Activated CD8-positive, alpha-beta T cell treated with anti-CD3 and anti-CD28 coated beads, Interleukin-2, amount 10 ng/mL, durations not matched to agents 7 days and 5 days (primary cell): ENCODE measurements at regions of chr2 and their contacts with region 1.

Region 1: GRCh38 chr2:236558993-236559978 is 10.3 kb upstream of the ACKR3 start:
- DNase-seq: no peak
- ATAC-seq: no peak
- H3K4me3 Mint-ChIP-seq: no peak overlapping the region
- H3K27ac Mint-ChIP-seq: no peak overlapping the region
- H3K4me1 Mint-ChIP-seq: peaks cover 44% of the 10 kb centered on the region
- H3K27me3 Mint-ChIP-seq: no peaks in the 10 kb centered on the region

Region 2: DNA sequence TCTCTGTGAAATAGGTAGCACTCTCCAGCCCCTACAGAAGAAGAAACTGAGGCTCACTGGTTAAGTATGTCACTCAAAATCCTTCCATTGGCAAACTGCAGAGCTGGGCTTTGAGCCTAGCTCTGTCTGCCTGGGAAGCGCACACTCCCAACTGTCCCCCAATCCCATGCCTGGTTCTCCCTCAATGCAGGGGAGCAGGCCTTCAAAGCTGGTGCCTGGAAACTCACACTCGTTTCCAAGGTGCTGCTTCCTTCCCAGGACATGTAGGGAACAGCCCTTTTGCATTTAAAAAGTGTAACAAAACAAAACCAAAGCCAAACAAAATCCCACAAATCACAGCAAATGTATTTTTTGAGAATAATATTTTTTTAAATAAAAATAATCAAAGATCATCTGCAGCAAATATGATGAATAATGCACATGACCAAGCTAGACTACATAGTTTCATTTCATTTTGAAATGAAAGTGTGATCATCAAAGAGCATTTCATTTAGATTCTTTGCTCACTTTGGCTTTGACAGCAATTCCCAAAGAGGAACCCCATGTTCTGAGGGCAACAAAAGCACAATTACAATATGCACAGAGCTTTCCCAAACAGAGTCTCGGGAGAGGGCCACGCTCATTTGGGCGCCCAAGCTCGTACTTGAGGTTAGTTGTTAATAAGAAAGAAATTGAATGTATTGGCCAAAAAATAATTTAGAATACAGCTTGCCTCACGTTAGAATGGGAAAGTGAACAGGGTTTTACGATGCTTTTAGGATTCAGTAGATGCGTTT is 86.4 kb before region 1 on chr2:
- CTCF ChIA-PET with region 1: no interaction called
- POLR2A ChIA-PET with region 1: no interaction called
- DNase-seq: no peak
- ATAC-seq: no peak
- H3K4me3 Mint-ChIP-seq: no peak overlapping the region
- H3K27ac Mint-ChIP-seq: no peak overlapping the region
- H3K4me1 Mint-ChIP-seq: no peaks in the 10 kb centered on the region
- H3K27me3 Mint-ChIP-seq: peaks cover 9% of the 10 kb centered on the region

Region 3: DNA sequence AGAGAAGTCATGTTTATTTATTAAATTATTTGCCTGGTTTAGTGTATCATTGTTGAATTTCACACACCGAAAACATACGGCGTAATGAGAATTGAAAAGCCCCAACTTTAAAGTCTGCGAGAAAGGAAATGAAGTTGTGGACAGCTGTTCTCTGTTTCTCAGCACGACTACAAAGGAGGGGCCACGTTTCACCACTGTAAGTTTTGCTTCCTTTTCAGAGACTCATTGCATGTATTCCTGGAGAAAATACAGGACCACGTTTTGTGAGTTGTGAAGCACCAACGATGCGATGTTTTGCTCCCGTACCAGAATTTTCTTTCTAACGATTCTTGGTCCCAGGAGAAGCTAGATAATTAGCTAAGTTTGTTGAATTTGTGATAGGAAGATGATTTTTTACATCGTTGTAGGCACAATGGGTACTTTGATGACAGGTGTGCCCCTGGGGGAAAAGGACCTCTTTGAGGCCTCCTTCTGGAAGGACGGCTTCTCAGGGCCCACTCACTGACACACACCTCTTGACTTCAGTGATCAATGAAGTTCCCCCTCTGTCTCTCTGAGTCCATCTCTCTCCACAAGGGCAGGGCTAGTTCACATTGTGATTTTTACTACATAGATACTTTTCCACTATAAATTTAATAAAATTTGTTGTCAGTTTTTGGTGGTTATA is 13.3 kb before region 1 on chr2:
- CTCF ChIA-PET with region 1: interaction called, 7 read pairs
- POLR2A ChIA-PET with region 1: interaction called, 18 read pairs
- DNase-seq: peak; percentile 69
- ATAC-seq: peak; percentile 61
- H3K4me3 Mint-ChIP-seq: peak overlapping the region; percentile 75
- H3K27ac Mint-ChIP-seq: peak overlapping the region; percentile 90
- H3K4me1 Mint-ChIP-seq: peaks cover 92% of the 10 kb centered on the region
- H3K27me3 Mint-ChIP-seq: no peaks in the 10 kb centered on the region